Heart left ventricle (tissue), 16 donors: ENCODE measurements at regions of chr19 and their contacts with region 1.

Region 1: GRCh38 chr19:11035441-11036377 is 53.6 kb upstream of the LDLR start:
- DNase-seq: peak; percentile 89 to 95 (median 92)
- ATAC-seq: peak; percentile 93 to 96 (median 93)
- H3K4me3 ChIP-seq: no peak overlapping the region
- H3K27ac ChIP-seq: peak overlapping the region in 4 of 12 donors; percentile 9 to 33 (median 20)
- H3K4me1 ChIP-seq: peaks cover 0 to 9% (median 4%) of the 10 kb centered on the region in 12 donors
- H3K27me3 ChIP-seq: no peaks in the 10 kb centered on the region
- CTCF ChIP-seq: peak; percentile 73 to 92 (median 87)
- POLR2A ChIP-seq: no peak

Region 2: DNA sequence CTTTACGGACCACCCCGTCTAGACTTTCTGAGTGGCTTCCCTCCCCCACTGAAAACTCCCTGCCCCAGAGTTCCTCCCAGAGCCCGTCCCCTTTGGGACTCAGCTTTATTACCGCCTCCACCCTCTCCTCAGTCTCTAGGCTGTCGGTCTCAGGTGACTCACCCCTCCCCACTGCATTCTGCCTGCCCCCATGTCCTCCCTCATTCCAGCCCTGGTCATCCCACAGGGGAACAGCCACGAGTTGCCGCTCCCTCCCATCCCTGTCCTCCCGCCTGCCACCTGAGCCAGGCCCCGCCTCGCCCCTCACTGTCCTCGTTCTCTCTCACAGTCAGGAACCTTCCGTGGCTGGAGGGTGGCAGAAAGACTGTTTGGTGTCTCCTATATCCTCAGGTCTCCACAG is 17.5 kb before region 1 on chr19:
- intact Hi-C with region 1: no loop called
- DNase-seq: no peak
- ATAC-seq: no peak
- H3K4me3 ChIP-seq: no peak overlapping the region
- H3K27ac ChIP-seq: no peak overlapping the region
- H3K4me1 ChIP-seq: peaks cover 0 to 18% (median 0%) of the 10 kb centered on the region in 12 donors
- H3K27me3 ChIP-seq: no peaks in the 10 kb centered on the region
- CTCF ChIP-seq: no peak
- POLR2A ChIP-seq: no peak

Region 3: DNA sequence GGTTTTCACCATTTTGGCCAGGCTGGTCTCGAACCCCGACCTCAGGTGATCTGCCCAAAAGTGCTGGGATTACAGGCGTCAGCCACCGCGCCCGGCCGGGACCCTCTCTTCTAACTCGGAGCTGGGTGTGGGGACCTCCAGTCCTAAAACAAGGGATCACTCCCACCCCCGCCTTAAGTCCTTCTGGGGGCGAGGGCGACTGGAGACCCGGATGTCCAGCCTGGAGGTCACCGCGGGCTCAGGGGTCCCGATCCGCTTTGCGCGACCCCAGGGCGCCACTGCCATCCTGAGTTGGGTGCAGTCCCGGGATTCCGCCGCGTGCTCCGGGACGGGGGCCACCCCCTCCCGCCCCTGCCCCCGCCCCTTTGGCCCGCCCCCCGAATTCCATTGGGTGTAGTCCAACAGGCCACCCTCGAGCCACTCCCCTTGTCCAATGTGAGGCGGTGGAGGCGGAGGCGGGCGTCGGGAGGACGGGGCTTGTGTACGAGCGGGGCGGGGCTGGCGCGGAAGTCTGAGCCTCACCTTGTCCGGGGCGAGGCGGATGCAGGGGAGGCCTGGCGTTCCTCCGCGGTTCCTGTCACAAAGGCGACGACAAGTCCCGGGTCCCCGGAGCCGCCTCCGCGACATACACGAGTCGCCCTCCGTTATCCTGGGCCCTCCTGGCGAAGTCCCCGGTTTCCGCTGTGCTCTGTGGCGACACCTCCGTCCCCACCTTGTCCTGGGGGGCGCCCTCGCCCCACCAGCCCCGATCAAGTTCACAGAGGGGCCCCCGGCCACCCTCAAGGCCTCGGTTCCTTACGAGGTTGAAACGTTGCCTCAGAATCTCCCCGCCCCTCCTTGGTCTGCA is 54.6 kb after region 1 on chr19:
- intact Hi-C with region 1: loop called in 5 of 10 experiments (anchors 5 to 10 kb)
- DNase-seq: peak; percentile 99
- ATAC-seq: peak; percentile 91 to 97 (median 94)
- H3K4me3 ChIP-seq: peak overlapping the region; percentile 57 to 82 (median 72)
- H3K27ac ChIP-seq: peak overlapping the region; percentile 88 to 99 (median 96)
- H3K4me1 ChIP-seq: peaks cover 0 to 75% (median 44%) of the 10 kb centered on the region in 12 donors
- H3K27me3 ChIP-seq: no peaks in the 10 kb centered on the region
- CTCF ChIP-seq: no peak
- POLR2A ChIP-seq: peak in 1 of 2 donors; percentile 89

Region 4: DNA sequence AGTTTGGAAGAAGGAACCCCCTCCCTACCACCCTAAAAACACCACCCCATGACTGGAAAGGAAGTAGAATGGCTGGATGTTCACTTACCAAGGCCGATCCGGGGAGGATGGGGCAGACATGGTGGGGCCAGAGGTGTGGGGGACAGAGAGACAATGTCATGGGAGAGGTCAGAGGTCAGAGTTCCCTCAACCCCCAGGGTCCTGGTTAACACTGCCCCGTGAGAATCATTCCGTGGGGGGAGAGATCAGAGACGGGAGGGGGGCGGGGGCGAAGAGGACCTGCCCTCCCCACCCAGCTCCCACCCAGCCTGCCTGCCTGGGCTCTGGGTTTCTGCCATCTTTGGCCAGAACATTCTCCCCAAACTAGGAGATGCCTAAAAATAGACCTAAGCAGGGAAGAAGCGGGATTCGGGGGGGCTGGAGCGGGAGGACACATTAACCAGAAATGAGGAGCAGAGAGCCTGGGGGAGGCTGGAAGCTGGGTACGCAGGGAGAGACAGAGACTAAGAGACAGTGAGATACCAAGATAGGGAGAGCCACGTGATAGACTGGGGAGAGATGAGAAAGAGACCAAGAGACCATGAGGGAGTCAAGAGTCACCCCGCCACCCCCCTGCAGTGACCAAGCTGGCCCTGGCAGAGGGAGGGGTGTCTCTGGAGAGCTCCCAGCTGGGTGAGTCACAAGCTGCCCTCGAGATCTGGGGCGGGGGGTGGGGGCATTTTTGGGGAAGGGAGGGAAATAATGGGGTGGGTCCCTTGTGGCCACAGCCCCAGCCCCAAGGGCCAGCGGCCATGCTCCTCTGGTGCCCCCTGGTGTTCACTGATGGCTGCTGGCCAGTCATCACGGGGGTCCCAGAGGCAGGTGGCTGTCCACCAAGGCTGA is 167.7 kb after region 1 on chr19:
- intact Hi-C with region 1: loop called in 7 of 10 experiments (anchors 5 to 10 kb)
- DNase-seq: peak; percentile 82 to 89 (median 88)
- ATAC-seq: peak; percentile 75 to 83 (median 78)
- H3K4me3 ChIP-seq: peak overlapping the region in 9 of 12 donors; percentile 1 to 43 (median 35)
- H3K27ac ChIP-seq: peak overlapping the region; percentile 78 to 97 (median 90)
- H3K4me1 ChIP-seq: peaks cover 0 to 42% (median 26%) of the 10 kb centered on the region in 12 donors
- H3K27me3 ChIP-seq: no peaks in the 10 kb centered on the region
- CTCF ChIP-seq: peak; percentile 72 to 94 (median 86)
- POLR2A ChIP-seq: no peak